ENCODE measurements at regions of chrX and their contacts with region 1.

Region 1: DNA sequence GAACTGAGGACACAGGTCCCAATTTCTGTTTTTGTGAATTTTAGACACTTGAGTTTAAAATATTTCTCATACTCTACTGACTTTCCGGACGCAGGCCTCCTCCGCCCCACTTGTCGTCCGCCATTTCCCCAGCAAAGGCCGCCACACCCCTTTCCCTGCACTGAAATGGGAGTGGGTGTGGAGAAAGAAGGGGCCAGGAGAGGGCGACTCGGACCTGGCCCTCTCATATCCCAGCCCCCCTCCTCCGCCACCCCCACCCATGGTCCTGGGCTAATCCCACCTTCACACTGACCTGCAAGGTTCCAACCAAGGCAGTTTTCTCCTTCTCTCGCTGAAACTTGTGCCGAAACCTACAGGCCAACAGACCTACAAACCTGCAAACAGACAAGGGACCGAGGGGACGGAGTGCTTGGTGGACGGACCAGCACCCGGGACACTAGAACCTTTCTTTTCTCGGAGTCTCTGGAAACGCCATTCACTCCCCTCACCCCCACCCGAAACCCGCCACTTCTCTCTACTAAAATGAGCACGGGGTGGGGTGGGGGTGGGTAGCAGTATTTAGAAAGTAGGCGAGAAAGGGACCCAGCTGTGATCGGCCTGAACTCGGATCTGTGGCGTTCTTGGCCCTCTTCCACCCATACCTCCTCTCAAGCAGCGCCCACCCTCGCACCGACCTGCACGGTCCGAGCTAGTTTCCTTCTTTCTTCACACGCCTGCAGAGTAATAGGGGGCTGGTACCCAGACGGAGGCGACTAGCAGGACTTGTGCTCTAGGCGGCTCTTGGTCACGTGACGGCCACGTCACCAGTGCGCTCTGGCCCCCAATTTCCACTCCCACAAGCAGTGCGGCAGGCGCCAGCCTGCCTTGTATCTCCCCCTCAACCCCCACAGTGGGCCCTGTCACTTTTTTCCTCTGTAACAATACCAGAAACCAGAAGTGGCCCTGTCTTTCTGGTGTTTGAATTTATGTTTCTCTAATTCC is at the start of gene ARMCX6:
- DNase-seq: peak; percentile 80
- H3K4me3 ChIP-seq: peak within 1 kb of the TSS; percentile 48 to 71 (median 60)
- H3K27ac ChIP-seq: peak within 1 kb of the TSS; percentile 81 to 89 (median 82)
- H3K4me1 ChIP-seq: peaks cover 0 to 8% (median 0%) of the 10 kb centered on the region in 4 donors
- H3K27me3 ChIP-seq: no peaks in the 10 kb centered on the region
- CTCF ChIP-seq: peak; percentile 4 to 27 (median 20)
- EP300 ChIP-seq: no peak
- POLR2A ChIP-seq: no peak
- total RNA-seq, gene ARMCX6: 7.2 to 13.5 TPM in 2 of 4 donors, not detected in the others

Region 2: GRCh38 chrX:101079736-101080270 is 537.7 kb before region 1 on chrX:
- in situ Hi-C with region 1: no loop called
- intact Hi-C with region 1: loop called (anchors 5 kb)
- DNase-seq: no peak
- H3K4me3 ChIP-seq: peak overlapping the region in 3 of 4 donors; percentile 32 to 48 (median 33)
- H3K27ac ChIP-seq: peak overlapping the region in 3 of 4 donors; percentile 50 to 75 (median 66)
- H3K4me1 ChIP-seq: no peaks in the 10 kb centered on the region
- H3K27me3 ChIP-seq: no peaks in the 10 kb centered on the region
- CTCF ChIP-seq: no peak
- EP300 ChIP-seq: no peak
- POLR2A ChIP-seq: no peak

Region 3: DNA sequence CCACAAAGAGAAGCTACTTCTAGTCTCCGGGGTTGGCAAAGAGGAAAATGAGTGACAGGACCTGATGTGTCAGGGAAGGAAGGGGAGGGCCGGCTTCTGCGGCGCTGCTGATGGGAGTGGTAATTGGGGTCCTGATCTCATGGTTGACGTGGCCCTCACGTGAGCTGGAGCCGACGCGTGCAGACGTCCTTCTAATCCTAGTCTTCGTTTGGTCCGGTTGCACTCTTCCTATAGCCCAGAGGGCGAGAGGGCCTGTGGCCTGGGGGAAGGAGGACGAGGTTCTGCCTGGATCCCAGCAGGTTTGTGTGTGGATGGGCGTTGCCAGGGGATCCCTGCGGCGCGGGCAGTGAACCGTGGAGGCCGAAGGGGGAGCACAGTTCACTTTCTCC is 67.1 kb before region 1 on chrX and contains the start of gene ARMCX1:
- in situ Hi-C with region 1: no loop called
- intact Hi-C with region 1: no loop called
- DNase-seq: peak; percentile 57
- H3K4me3 ChIP-seq: peak within 1 kb of the TSS; percentile 24 to 51 (median 36)
- H3K27ac ChIP-seq: peak within 1 kb of the TSS; percentile 74 to 89 (median 82)
- H3K4me1 ChIP-seq: no peaks in the 10 kb centered on the region
- H3K27me3 ChIP-seq: no peaks in the 10 kb centered on the region
- CTCF ChIP-seq: no peak
- EP300 ChIP-seq: no peak
- POLR2A ChIP-seq: peak; percentile 51
- total RNA-seq, gene ARMCX1: 5.2 to 16.1 (median 12.1) TPM

Region 4: GRCh38 chrX:102008901-102009300 is 391.4 kb after region 1 on chrX:
- in situ Hi-C with region 1: no loop called
- intact Hi-C with region 1: no loop called
- DNase-seq: no peak
- H3K4me3 ChIP-seq: no peak overlapping the region
- H3K27ac ChIP-seq: no peak overlapping the region
- H3K4me1 ChIP-seq: no peaks in the 10 kb centered on the region
- H3K27me3 ChIP-seq: no peaks in the 10 kb centered on the region
- CTCF ChIP-seq: no peak
- EP300 ChIP-seq: no peak
- POLR2A ChIP-seq: no peak